ENCODE measurements at regions of chr7 and their contacts with region 1.

Region 1: DNA sequence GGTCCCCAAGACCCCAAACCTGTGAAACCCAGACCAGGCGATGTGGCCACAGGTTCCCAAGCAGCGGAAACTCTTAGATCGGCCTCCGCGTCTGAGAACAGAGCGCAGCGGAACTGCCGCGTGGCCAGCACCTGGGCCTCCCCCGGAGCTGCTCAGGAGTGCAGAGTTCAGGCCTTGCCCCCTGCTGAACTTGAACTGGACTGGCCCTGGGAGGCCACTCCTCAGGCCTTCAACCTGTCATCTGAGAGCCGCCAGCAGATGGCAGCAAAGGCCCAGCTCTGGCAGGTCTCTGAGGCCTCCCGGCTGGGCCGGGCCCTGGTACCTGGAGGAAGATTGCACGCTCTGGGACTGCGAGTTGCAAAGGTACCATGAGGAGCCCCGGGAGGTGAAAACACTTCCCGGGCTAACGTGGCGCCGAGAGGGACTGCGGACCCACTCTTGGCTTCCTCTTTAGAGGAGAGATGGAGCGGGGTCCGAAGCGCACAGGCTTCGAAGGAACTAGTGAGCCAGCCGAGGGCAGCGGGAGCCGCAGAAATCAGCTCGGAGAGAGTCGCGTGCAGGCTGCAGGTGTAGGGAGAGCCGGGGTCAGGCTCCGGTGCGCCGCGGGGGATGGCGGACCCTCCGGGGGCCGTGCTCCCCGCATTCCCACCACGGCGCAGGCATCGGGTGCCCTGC is 89.1 kb downstream of the PAXIP1 start:
- DNase-seq: peak; percentile 88
- H3K4me3 Mint-ChIP-seq: peak overlapping the region; percentile 45
- H3K27ac Mint-ChIP-seq: no peak overlapping the region
- H3K4me1 Mint-ChIP-seq: peaks cover 3% of the 10 kb centered on the region
- H3K27me3 Mint-ChIP-seq: peaks cover 8% of the 10 kb centered on the region

Region 2: GRCh38 chr7:153581419-153581818 is 1332.4 kb before region 1 on chr7:
- CTCF ChIA-PET with region 1: no interaction called
- POLR2A ChIA-PET with region 1: no interaction called
- DNase-seq: no peak
- H3K4me3 Mint-ChIP-seq: no peak overlapping the region
- H3K27ac Mint-ChIP-seq: no peak overlapping the region
- H3K4me1 Mint-ChIP-seq: no peaks in the 10 kb centered on the region
- H3K27me3 Mint-ChIP-seq: no peaks in the 10 kb centered on the region

Region 3: DNA sequence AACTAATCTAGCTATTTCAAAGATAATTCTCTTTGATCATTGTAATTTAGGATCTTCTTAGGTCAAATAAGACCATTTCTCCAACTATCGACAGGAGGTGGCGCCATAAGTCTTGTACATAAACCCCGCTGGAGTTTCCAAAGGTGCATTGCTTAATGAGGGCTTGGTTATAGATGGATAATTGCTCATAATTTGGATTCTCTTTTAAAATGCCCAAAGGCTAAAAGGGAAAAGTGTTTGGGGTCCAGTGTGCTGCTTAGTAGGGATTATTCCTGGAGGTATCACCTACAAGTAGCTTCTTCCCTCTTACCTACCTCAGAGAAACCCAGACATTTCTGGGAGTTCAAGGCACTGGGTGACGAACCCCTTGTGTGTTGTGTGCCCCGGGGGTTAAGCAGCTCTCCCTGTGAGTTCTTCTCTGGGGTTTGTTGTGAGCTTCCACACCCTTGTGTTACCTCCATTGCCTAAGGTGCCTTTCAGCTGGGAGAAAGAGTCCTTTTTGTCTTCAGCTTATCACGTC is 13.9 kb after region 1 on chr7:
- CTCF ChIA-PET with region 1: interaction called, 15 read pairs
- POLR2A ChIA-PET with region 1: no interaction called
- DNase-seq: peak; percentile 88
- H3K4me3 Mint-ChIP-seq: peak overlapping the region; percentile 84
- H3K27ac Mint-ChIP-seq: peak overlapping the region; percentile 96
- H3K4me1 Mint-ChIP-seq: peaks cover 22% of the 10 kb centered on the region
- H3K27me3 Mint-ChIP-seq: peaks cover 3% of the 10 kb centered on the region